ENCODE measurements at regions of chr11 and their contacts with region 1.

Region 1: DNA sequence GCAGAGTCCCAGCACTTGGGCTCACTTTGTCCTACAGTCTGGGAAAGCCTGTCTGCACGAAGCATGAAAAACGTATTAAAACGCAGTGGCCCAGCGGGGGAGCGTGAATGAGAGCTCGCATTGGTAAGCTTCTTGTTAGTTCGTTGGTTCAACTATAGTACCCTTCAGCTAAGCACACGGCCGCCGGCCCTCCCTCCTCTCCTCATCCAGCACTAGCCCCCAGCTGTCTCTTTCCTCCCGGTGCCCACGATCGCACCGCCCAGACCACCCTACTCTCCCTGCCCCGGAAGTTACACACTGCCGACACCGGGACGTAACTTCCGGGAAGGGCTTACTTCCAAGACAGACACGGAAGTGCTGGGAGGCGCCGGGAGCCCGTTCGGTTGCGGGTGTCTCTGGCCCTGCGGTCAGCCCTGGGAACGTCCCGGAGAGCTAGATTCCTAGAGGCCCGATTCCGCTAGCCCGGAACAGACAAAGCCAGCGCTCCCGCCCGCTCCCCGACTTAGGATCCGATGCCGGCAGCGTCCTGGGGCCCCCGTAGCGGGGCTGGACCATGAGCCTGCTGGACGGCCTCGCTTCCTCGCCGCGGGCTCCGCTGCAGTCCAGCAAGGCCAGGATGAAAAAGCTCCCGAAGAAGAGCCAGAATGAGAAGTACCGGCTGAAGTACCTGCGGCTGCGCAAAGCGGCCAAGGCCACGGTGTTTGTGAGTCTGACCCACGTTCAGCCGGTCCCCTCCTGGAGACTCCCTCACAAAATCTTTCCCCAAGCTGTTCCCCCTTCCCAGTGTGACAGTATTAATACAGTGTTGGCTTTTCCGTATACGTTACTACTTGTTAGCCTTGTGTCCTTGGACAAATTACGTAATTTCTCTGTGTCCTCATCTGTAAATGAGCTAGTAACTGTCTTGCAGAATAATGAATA is at the start of gene TBRG1:
- DNase-seq: peak; percentile 87
- ATAC-seq: peak; percentile 99
- H3K4me3 Mint-ChIP-seq: peak within 1 kb of the TSS; percentile 93
- H3K27ac Mint-ChIP-seq: peak within 1 kb of the TSS; percentile 95
- H3K4me1 Mint-ChIP-seq: peaks cover 22% of the 10 kb centered on the region
- H3K27me3 Mint-ChIP-seq: peaks cover 5% of the 10 kb centered on the region
- total RNA-seq, gene TBRG1: 29.6 to 40.6 TPM

Region 2: DNA sequence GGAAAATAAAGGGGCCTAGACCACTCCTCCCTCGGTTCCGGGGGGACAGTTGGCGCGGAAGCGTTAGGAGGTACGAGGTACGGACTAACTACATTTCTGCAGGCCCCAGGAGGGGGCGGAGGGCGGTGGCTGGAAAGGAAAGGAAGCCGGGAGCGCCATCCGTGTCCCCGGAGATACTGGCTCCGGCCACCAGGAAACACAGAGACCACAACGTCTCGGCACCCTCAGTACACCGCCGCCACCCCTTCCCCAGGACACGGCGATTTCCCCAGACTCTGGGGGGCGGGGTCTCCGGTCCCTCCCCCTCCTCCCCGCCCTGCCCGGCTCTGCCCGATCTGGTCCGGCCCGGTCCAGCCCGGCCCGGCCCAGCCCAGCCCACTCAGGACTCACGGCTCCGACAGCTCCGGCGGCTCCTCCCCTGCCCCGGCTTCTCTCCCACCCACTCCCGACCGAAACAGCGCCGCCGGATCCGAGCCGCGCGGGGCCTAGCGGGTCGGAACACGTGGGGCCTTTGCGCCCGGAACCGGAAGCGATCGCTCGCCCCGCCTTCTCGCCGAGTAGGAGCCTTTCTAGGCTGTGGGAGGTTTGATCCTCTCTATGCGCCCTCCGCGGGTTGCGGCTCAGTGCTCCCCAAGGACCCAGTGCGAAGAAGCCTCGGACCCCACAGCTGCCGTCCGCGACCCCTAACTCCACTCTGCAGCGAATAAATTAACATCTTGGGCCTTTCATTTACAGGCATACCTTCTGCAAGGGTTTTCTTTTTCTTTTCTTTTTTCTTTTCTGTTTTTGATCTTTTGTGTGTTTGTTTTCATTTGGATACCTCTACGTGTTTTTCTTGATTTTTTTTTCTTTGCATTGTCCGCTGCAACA is 881.4 kb before region 1 on chr11 and contains the start of gene ZNF202:
- CTCF ChIA-PET with region 1: no interaction called
- POLR2A ChIA-PET with region 1: no interaction called
- intact Hi-C with region 1: loop called in 1 of 2 experiments (anchors 2 kb)
- DNase-seq: peak; percentile 96
- ATAC-seq: peak; percentile 96
- H3K4me3 Mint-ChIP-seq: peak within 1 kb of the TSS; percentile 81
- H3K27ac Mint-ChIP-seq: peak within 1 kb of the TSS; percentile 97
- H3K4me1 Mint-ChIP-seq: peaks cover 31% of the 10 kb centered on the region
- H3K27me3 Mint-ChIP-seq: peaks cover 2% of the 10 kb centered on the region
- total RNA-seq, gene ZNF202: 9.5 to 12.1 TPM

Region 3: GRCh38 chr11:124551189-124551588 is 71.6 kb before region 1 on chr11:
- CTCF ChIA-PET with region 1: no interaction called
- POLR2A ChIA-PET with region 1: no interaction called
- intact Hi-C with region 1: no loop called
- DNase-seq: no peak
- ATAC-seq: no peak
- H3K4me3 Mint-ChIP-seq: no peak overlapping the region
- H3K27ac Mint-ChIP-seq: no peak overlapping the region
- H3K4me1 Mint-ChIP-seq: no peaks in the 10 kb centered on the region
- H3K27me3 Mint-ChIP-seq: peaks cover 6% of the 10 kb centered on the region

Region 4: DNA sequence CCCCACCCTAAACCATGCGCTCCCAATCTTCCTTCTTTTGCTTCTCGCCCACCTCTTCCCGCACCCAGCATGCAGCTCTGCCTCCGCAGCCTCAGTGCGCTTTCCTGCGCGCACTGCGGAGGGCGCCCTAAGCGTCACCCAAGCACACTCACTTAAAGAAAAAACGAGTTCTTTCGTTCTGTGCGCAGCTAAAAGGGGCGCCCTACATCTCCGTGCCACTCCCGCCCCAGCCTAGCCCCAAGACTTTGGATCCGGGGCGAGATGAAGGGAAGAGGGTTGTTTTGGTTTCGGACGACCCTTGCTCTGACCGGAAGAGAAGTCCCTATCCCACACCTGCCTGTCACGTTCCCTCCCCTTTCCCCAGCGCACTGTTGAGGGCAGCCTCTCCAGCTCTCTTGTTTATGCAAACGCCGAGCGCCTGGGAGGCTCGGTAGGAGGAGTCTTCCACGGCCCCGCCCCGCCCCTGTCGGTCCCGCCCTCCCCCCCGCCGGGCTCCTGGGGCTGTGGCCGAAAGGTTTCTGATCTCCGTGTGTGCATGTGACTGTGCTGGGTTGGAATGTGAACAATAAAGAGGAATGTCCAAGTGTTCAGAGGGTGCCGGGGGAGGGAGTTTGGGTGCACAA is 123.9 kb after region 1 on chr11:
- CTCF ChIA-PET with region 1: interaction called, 4 read pairs
- POLR2A ChIA-PET with region 1: no interaction called
- intact Hi-C with region 1: loop called in 1 of 2 experiments (anchors 5 kb)
- DNase-seq: peak; percentile 88
- ATAC-seq: peak; percentile 92
- H3K4me3 Mint-ChIP-seq: peak overlapping the region; percentile 81
- H3K27ac Mint-ChIP-seq: peak overlapping the region; percentile 90
- H3K4me1 Mint-ChIP-seq: peaks cover 11% of the 10 kb centered on the region
- H3K27me3 Mint-ChIP-seq: peaks cover 2% of the 10 kb centered on the region

Region 5: DNA sequence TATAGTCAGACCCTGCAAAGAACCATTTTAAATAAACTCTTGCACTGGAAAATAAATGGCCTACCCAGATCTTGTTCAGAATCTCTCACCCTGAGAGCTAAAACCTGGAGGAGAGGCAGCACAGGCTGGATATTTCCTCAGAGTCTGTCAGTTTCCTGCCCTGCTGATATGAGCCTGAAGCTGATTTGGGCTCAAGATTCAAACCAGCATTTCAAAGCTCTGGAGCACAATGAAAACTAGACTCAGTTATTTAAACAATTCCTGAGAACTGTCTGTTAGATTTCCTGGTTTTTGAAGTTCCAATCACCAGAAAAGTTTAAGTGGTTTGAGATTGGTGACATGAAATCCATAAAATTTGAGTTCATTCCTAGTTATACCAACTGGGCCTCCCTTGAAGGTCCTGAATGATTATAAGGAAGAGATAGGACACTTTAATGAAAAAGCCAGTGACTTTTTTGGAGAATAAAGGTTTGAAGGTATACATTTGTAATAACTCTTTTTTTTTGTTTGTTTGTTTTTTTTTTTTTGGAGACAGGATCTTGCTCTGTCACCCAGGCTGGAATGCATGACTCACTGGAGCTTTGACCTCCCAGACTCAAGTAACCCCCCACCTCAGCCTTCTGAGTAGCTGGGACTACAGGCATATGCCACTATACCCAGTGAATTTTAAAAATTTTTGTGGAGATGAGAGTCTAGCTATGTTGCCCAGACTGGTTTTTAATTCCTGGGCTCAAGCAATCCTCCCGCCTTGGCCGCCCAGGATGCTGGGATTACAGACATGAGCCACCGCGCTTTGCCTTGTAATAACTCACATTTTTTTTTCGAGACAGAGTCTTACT is 147.2 kb after region 1 on chr11:
- CTCF ChIA-PET with region 1: no interaction called
- POLR2A ChIA-PET with region 1: no interaction called
- intact Hi-C with region 1: no loop called
- DNase-seq: no peak
- ATAC-seq: no peak
- H3K4me3 Mint-ChIP-seq: no peak overlapping the region
- H3K27ac Mint-ChIP-seq: no peak overlapping the region
- H3K4me1 Mint-ChIP-seq: no peaks in the 10 kb centered on the region
- H3K27me3 Mint-ChIP-seq: no peaks in the 10 kb centered on the region

Region 6: GRCh38 chr11:124953753-124954589 is 331.2 kb after region 1 on chr11 and contains the start of gene CCDC15:
- CTCF ChIA-PET with region 1: no interaction called
- POLR2A ChIA-PET with region 1: no interaction called
- intact Hi-C with region 1: loop called in 1 of 2 experiments (anchors 1 kb)
- DNase-seq: peak; percentile 97
- ATAC-seq: peak; percentile 98
- H3K4me3 Mint-ChIP-seq: no peak within 1 kb of the TSS
- H3K27ac Mint-ChIP-seq: no peak within 1 kb of the TSS
- H3K4me1 Mint-ChIP-seq: peaks cover 4% of the 10 kb centered on the region
- H3K27me3 Mint-ChIP-seq: no peaks in the 10 kb centered on the region
- total RNA-seq, gene CCDC15: 5.6 to 6.7 TPM